ENCODE measurements at regions of chr9 and their contacts with region 1.

Region 1: GRCh38 chr9:132768932-132769905 is 99.0 kb downstream of the GTF3C4 start:
- DNase-seq: peak; percentile 78
- ATAC-seq: peak; percentile 74
- H3K4me3 ChIP-seq: peak overlapping the region; percentile 76 to 96 (median 85)
- H3K4me3 Mint-ChIP-seq: peak overlapping the region; percentile 100
- H3K27ac ChIP-seq: peak overlapping the region; percentile 74 to 84
- H3K27ac Mint-ChIP-seq: peak overlapping the region; percentile 100
- H3K4me1 ChIP-seq: peaks cover 10 to 11% of the 10 kb centered on the region in 2 donors
- H3K4me1 Mint-ChIP-seq: peaks cover 9% of the 10 kb centered on the region
- H3K27me3 ChIP-seq: no peaks in the 10 kb centered on the region
- H3K27me3 Mint-ChIP-seq: peaks cover 5% of the 10 kb centered on the region
- CTCF ChIP-seq: peak; percentile 73

Region 2: DNA sequence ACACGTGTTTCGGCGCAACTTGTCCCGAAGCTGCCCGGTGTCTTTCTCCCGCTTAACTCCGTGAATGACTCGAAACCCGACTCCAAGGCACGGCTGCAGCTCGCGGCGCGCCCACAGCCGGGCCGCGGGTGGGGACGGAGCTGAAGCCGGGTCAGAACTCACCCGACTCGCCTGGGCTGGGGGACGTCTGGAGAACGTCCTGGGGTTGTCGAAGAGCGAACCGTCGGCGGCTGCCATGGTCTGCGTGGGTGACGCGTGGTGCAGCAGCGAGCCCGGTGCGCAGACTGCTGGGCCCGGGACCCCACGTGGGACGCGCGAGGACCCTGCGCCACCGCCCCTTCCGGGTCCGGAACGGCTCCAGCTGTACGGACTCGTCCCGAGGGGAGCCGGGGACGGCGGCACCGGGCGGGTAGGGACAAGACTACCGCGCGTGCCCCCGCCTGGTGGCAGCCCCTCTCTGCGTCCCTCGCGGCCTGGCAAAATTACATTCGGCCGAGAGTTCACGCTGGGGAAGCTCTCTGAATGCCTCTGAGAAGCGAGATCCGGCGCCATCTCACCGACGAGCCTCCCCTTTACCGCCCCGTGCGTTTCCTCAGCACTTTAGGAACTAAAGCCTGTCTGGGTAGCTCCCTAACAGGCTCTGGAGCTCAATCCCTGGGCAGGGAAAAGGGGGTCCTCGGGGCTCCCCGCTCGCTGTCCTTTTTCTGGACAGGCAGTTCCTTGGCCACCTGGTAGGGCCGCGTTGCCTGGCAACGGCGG is 99.3 kb before region 1 on chr9 and contains the start of gene DDX31:
- CTCF ChIA-PET with region 1: interaction called, 3 read pairs
- POLR2A ChIA-PET with region 1: interaction called, 15 read pairs
- intact Hi-C with region 1: loop called (anchors 2 kb)
- DNase-seq: peak; percentile 94
- ATAC-seq: peak; percentile 82
- H3K4me3 ChIP-seq: peak within 1 kb of the TSS; percentile 73 to 100 (median 96)
- H3K4me3 Mint-ChIP-seq: peak within 1 kb of the TSS; percentile 93
- H3K27ac ChIP-seq: peak within 1 kb of the TSS; percentile 86 to 95
- H3K27ac Mint-ChIP-seq: peak within 1 kb of the TSS; percentile 94
- H3K4me1 ChIP-seq: peaks cover 20 to 28% of the 10 kb centered on the region in 2 donors
- H3K4me1 Mint-ChIP-seq: peaks cover 52% of the 10 kb centered on the region
- H3K27me3 ChIP-seq: no peaks in the 10 kb centered on the region
- H3K27me3 Mint-ChIP-seq: no peaks in the 10 kb centered on the region
- CTCF ChIP-seq: no peak
- total RNA-seq, gene DDX31: 22.2 and 22.7 TPM in 2 replicates

Region 3: DNA sequence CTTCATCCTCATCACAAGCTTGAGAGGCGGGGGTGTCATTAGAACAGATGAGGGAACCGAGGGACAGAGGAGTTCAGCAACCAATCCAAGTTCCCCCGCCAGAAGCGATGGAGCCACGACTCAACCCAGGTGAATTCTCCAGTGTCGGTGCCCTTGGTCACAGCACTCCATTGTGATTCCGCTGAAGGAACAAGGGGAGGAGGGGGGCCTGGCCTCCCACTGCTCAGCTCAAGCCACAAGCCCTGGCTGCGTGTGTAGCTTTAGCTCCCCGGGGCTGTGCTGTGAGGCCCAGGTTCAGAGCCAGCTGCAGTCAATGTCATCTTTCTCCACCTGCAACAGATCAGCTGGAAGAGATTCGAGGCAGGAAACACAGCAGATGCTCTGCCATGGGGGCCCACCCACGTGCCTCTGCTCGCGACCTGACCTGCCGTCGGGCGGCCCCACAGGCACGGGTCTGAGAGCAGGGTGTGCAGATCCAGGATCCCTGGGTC is 26.4 kb before region 1 on chr9:
- CTCF ChIA-PET with region 1: no interaction called
- POLR2A ChIA-PET with region 1: no interaction called
- intact Hi-C with region 1: no loop called
- DNase-seq: no peak
- ATAC-seq: no peak
- H3K4me3 ChIP-seq: no peak overlapping the region
- H3K4me3 Mint-ChIP-seq: no peak overlapping the region
- H3K27ac ChIP-seq: no peak overlapping the region
- H3K27ac Mint-ChIP-seq: no peak overlapping the region
- H3K4me1 ChIP-seq: no peaks in the 10 kb centered on the region
- H3K4me1 Mint-ChIP-seq: peaks cover 4% of the 10 kb centered on the region
- H3K27me3 ChIP-seq: peaks cover 0 to 34% (median 14%) of the 10 kb centered on the region in 4 experiments
- H3K27me3 Mint-ChIP-seq: peaks cover 40% of the 10 kb centered on the region
- CTCF ChIP-seq: no peak

Region 4: DNA sequence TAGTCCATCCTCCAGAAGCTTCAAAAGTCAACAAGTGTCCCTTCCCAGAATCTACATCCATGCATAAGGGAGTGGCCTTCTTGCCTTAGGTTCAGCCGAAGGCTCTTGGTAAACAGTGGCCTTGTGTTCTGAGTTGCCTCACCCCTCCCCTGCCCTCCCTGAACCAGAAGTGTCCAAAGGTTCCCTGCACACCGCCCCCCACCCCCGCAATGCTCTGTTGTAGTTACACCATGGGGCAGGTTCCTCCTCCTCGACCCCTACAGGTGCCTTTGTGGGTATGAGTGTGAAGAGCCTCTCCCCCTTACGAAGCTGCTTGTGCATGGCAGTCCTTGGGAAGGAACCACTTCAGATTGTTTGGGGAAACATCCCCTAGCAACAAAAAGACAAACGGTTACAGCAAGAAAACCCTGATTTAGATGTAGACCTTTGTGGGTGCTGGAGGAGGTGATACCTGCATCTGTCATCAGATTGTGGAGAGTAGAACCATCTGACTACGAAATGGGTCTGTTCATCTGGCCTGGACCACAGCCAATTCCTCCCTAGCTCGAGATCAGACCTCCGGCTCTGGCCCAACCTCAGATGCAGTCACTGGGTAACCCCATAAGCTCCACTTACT is 116.6 kb after region 1 on chr9:
- CTCF ChIA-PET with region 1: no interaction called
- POLR2A ChIA-PET with region 1: no interaction called
- intact Hi-C with region 1: loop called (anchors 5 kb)
- DNase-seq: peak; percentile 61
- ATAC-seq: no peak
- H3K4me3 ChIP-seq: no peak overlapping the region
- H3K4me3 Mint-ChIP-seq: no peak overlapping the region
- H3K27ac ChIP-seq: peak overlapping the region in 1 of 2 donors; percentile 45
- H3K27ac Mint-ChIP-seq: peak overlapping the region; percentile 80
- H3K4me1 ChIP-seq: peaks cover 42 to 50% of the 10 kb centered on the region in 2 donors
- H3K4me1 Mint-ChIP-seq: peaks cover 45% of the 10 kb centered on the region
- H3K27me3 ChIP-seq: no peaks in the 10 kb centered on the region
- H3K27me3 Mint-ChIP-seq: no peaks in the 10 kb centered on the region
- CTCF ChIP-seq: no peak

Measured in B cell (primary cell).